Activated CD8-positive, alpha-beta memory T cell treated with anti-CD3 and anti-CD28 coated beads, Interleukin-2, amount 10 ng/mL, durations not matched to agents 7 days and 5 days (primary cell): ENCODE measurements at regions of chr5 and their contacts with region 1.

Region 1: DNA sequence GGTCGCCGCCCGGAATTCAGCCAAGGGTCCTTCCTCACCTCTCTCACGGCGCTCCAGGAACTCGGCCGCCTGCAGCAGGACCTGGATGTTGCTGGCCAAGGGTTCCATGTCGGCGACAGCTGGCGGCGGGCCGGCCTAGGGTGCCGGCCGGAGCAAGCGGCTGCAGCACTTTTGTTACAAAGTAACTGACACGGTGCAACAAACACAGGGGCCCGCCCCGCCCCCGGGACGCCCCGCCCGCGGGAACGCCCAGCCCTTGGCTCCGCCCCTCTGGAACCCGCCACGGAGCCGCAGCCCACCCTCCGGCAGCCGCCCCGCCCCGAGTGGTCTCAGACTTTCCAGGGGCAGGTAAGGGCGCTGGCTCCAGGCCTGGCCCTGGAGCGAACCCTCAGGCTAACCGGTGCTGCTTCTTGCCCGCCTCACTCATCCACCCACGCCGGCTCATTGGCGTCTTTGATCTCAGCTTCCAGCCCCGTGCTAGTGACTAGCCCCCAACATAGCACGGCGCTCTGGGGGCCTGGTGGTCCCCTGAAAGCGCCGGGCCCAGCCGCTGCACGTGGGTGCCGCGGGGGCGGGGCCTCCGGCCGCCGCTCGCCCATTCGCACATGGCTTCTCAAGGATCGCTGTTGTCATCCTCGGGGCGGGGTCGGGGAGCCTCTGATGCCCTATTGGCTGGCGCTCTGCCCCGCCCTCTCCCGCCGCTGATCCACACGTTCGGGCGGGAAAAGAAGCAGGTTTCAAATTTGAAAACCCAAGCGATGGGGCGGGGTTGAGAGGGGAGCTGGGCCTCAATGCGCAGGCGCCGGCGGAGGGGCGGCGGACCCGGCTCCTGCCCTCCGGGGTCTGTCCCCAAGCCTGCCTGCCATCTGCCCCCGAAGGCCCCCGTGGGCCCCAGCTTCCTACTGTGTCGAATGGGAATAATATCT is at the start of gene MXD3:
- DNase-seq: peak; percentile 99
- ATAC-seq: peak; percentile 88
- H3K4me3 Mint-ChIP-seq: peak within 1 kb of the TSS; percentile 97
- H3K27ac Mint-ChIP-seq: peak within 1 kb of the TSS; percentile 95
- H3K4me1 Mint-ChIP-seq: peaks cover 52% of the 10 kb centered on the region
- H3K27me3 Mint-ChIP-seq: no peaks in the 10 kb centered on the region
- total RNA-seq, gene MXD3: 60.2 to 117 TPM

Region 2: DNA sequence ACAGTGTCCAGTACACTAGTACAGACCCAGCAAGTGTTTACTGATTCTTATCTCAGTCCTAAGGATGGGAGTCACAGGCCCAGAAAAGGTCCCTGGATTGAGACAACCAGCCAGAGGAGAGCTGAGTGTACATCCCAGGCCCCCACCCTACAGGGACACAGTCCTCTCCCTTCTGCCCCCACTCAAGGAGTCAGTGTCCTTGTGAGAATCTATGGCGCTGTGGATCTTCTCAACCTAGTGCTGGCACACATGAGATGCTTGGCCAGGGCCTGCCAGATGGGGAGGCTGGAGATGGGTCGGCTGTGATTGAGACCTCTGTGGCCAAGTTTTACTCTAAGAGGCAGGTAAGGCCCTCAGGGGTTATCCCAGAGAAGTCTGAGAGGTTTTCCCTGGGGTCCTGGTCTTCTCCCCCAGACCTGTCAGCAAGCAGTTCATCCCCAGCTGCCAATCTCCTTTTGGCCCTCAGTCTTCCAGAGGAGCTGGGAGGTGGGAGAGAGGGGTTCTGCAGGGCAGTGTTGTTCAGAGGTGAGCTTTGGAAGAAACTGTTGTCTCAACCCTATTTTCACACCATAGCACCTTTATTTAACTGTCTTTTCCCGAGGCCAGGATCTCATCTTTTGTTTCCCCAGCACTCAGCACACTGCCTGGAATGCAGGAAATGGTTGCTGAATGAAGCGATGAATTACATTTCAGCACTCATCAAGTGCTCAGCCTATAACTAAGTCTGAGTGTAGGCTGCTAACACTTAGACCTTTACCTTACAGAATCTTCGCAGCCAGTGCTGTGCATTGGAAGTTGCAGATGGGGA is 181.6 kb before region 1 on chr5:
- CTCF ChIA-PET with region 1: no interaction called
- DNase-seq: no peak
- ATAC-seq: no peak
- H3K4me3 Mint-ChIP-seq: no peak overlapping the region
- H3K27ac Mint-ChIP-seq: no peak overlapping the region
- H3K4me1 Mint-ChIP-seq: peaks cover 27% of the 10 kb centered on the region
- H3K27me3 Mint-ChIP-seq: no peaks in the 10 kb centered on the region

Region 3: GRCh38 chr5:177242304-177242703 is 69.7 kb before region 1 on chr5:
- CTCF ChIA-PET with region 1: no interaction called
- DNase-seq: no peak
- ATAC-seq: no peak
- H3K4me3 Mint-ChIP-seq: no peak overlapping the region
- H3K27ac Mint-ChIP-seq: no peak overlapping the region
- H3K4me1 Mint-ChIP-seq: peaks cover 2% of the 10 kb centered on the region
- H3K27me3 Mint-ChIP-seq: no peaks in the 10 kb centered on the region

Region 4: DNA sequence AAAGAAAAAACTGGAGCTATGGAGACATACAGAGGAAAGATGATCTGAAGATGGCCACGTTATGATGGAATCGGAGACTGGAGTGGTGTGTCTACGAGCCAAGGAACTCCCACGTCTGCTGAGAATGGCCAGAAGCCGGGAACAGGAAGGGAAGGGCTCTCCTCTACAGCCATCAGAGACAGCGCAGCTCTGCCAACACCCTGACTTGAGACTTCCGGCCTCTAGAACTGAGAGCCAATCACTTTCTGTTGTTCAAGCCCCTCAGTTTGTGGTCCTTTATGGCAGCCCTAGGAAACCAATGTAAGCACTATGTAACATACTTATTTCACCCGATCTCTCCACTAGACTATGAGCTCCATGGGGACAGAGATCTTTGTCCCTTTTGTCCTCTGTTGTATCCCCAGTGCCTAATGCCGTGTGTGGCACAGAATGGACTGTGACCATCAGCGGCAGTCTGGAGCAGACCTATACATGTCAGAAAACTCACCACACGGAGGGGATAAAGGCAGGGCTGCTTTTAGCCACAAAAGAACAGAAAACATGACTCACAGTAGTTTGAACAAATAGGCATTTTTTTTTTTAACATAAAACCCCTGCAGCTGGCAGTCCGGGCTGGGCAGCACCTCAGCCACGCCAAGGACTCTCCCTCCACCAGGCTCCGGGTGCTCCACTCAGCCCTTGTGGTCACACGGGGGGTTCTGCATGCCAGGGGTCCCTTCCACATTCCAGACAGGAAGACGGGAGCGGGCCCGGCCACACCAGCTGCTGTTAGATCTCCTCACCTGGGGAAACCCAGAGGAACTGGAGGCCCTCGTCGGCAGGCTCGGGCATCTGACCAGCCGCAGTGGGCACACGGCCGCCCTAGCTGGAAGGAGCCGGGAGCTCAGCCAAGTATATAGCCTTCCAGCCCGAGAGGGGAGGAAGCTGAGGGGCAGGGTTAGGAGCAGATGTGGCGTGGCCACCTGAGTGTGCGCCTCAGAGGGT is 15.8 kb after region 1 on chr5:
- CTCF ChIA-PET with region 1: interaction called, 12 read pairs
- DNase-seq: no peak
- ATAC-seq: peak; percentile 77
- H3K4me3 Mint-ChIP-seq: peak overlapping the region; percentile 32
- H3K27ac Mint-ChIP-seq: peak overlapping the region; percentile 76
- H3K4me1 Mint-ChIP-seq: peaks cover 37% of the 10 kb centered on the region
- H3K27me3 Mint-ChIP-seq: no peaks in the 10 kb centered on the region

Region 5: DNA sequence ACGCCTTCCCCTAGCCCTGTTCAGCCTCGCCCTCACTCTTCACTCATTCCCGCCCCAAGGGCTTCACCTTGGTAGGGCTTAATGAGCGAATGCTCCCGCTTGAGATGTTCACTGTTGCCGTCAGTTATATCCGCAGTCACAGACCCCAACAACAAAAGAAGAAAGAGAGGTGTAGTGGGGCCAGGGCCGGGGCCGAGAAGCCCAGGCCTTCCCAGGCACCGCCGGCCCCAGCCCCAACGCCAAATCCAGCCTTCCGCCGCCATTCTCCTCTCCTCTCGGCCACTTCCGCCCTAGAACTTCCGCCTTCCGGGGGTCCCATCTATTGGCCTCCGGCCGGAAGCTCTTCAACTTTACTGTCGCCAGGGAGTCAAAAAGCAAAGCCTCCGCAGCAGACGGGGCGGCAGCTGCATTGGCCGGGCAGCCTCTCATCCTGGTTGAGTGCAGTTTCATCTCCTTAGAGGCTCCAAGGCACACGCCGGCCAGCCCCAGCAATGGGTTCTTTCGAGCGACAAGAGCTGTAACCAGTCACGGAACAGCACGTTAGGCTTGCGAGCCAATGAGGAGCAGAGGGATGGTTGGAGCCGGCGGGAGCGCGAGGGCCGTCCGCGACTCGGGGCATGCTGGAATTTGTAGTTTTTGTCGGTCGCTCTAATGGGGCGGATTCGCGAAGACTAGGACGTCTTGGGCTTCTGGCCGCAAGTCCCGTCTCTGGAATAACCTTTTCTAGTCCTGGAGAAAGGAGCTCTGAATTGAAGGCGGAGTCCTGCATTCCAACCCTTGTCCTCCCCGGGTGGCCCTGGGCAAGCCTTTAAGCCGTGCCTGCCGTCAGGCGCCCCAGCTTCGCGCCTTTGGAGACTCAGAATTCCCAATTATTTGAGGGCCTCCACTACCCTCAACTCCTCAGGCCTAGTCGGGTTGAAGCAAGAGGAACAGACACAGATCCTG is 39.7 kb after region 1 on chr5 and contains the start of gene LMAN2:
- CTCF ChIA-PET with region 1: interaction called, 17 read pairs
- DNase-seq: peak; percentile 96
- ATAC-seq: peak; percentile 99
- H3K4me3 Mint-ChIP-seq: peak within 1 kb of the TSS; percentile 98
- H3K27ac Mint-ChIP-seq: peak within 1 kb of the TSS; percentile 100
- H3K4me1 Mint-ChIP-seq: peaks cover 65% of the 10 kb centered on the region
- H3K27me3 Mint-ChIP-seq: no peaks in the 10 kb centered on the region
- total RNA-seq, gene LMAN2: 133 to 140 TPM

Region 6: GRCh38 chr5:177370488-177371119 is 58.6 kb after region 1 on chr5:
- CTCF ChIA-PET with region 1: interaction called, 57 read pairs
- DNase-seq: peak; percentile 77
- ATAC-seq: peak; percentile 83
- H3K4me3 Mint-ChIP-seq: peak overlapping the region; percentile 53
- H3K27ac Mint-ChIP-seq: no peak overlapping the region
- H3K4me1 Mint-ChIP-seq: peaks cover 56% of the 10 kb centered on the region
- H3K27me3 Mint-ChIP-seq: no peaks in the 10 kb centered on the region

Region 7: GRCh38 chr5:177431317-177432142 is 119.5 kb after region 1 on chr5:
- CTCF ChIA-PET with region 1: interaction called, 14 read pairs
- DNase-seq: peak; percentile 93
- ATAC-seq: peak; percentile 60
- H3K4me3 Mint-ChIP-seq: peak overlapping the region; percentile 89
- H3K27ac Mint-ChIP-seq: peak overlapping the region; percentile 94
- H3K4me1 Mint-ChIP-seq: peaks cover 73% of the 10 kb centered on the region
- H3K27me3 Mint-ChIP-seq: no peaks in the 10 kb centered on the region